ENCODE measurements at regions of chr10 and their contacts with region 1.

Region 1: DNA sequence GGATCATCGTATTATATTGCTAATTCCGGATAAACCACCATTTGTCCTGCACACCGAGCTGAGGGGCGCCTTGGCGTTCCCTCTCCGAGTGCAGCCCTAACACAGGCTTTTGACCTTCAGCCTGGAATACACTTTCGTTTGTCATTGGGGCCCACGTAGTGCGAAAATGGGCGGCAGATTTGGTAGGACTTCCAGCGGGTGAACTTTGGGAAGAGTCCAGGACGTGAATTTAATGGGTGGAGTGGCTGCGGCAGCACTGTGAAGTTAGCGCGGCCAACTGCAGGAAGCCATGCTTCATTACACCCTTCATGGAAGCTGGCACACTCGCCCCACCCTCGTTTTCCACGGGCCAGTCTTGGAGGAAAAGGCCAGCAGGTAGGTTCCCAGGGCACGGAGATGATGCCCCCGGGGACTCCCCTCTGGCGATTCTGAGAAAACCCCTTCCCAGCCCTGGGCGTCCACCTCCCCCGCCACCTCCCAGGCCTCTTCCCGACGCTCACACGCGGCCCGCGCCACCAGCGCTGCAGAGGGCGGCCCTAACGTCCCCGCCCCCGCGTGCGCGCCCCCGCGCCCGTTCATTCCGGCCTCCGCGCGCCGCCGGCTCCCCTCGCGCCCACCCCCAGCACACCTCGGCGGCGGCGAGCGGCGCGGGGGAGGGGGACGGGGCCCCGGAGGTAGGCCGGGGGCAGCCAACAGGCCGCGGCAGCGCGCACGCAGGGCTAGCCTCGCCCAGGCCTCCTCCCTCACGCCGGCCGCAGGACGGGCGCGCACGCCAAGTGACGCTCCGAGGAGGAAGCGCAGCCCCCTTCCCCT is at the start of gene MLLT10:
- DNase-seq: peak; percentile 96 to 98 (median 97)
- ATAC-seq: peak; percentile 86 to 97 (median 94)
- H3K4me3 ChIP-seq: peak within 1 kb of the TSS; percentile 54 to 88 (median 78)
- H3K27ac ChIP-seq: peak within 1 kb of the TSS; percentile 89 to 99 (median 97)
- H3K4me1 ChIP-seq: peaks cover 0 to 31% (median 22%) of the 10 kb centered on the region in 12 donors
- H3K27me3 ChIP-seq: no peaks in the 10 kb centered on the region
- CTCF ChIP-seq: peak in 7 of 12 donors; percentile 17 to 44 (median 21)
- POLR2A ChIP-seq: peak in 1 of 2 donors; percentile 76
- total RNA-seq, gene MLLT10: 17.1 to 30.7 (median 25.2) TPM

Region 2: GRCh38 chr10:21464143-21464533 is 69.5 kb before region 1 on chr10:
- intact Hi-C with region 1: no loop called
- DNase-seq: no peak
- ATAC-seq: no peak
- H3K4me3 ChIP-seq: no peak overlapping the region
- H3K27ac ChIP-seq: no peak overlapping the region
- H3K4me1 ChIP-seq: no peaks in the 10 kb centered on the region
- H3K27me3 ChIP-seq: no peaks in the 10 kb centered on the region
- CTCF ChIP-seq: no peak
- POLR2A ChIP-seq: no peak

Region 3: DNA sequence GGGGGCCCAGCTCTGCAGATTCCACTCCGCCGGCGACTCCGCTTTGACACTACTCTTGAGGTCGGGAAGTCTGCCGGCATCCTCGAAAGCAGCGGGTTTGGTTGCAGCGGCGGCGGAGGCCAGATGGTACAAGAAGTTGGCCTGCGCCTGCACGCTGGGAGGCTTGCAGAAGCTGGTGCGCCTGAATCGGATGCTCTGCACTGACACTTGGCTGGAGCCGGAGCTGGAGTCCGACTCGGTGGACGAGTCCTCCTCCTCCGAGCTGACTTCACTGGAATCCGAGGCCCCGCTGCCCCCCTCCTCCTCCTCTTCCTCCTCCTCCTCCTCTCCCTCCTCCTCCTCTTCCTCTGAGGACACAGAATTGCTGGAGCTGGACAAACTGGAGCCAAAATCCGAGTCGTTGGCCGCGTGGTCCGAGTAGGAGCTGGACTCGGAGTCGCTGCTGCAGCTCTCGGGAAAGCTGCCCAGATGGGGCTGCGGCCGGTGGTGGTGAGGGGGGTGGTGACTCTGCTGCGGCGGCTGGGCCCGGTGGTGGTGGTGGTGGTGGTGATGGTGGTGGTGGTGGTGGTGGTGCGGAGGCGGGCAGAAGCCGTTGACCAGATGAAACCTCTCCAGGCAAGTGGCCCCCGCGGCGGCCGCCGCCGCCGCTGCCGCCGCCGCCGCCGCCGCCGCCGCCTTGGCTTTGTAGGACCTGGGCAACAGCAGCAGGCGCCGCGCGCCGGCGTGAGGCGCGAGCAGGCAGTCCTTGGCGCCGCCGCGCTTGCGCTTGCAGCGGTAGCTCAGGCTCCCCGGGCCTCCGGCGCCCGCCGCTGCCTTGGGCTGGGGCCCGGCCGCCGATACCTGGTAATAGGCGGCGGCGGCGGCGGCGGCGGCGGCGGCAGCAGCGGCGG is 17.2 kb before region 1 on chr10:
- intact Hi-C with region 1: loop called in 2 of 10 experiments (anchors 2 kb)
- DNase-seq: peak; percentile 56 to 83 (median 63)
- ATAC-seq: peak in 3 of 4 donors; percentile 37 to 71 (median 47)
- H3K4me3 ChIP-seq: peak overlapping the region; percentile 52 to 80 (median 70)
- H3K27ac ChIP-seq: peak overlapping the region; percentile 47 to 90 (median 84)
- H3K4me1 ChIP-seq: peaks cover 0 to 48% (median 15%) of the 10 kb centered on the region in 12 donors
- H3K27me3 ChIP-seq: peaks cover 0 to 59% (median 0%) of the 10 kb centered on the region in 9 donors
- CTCF ChIP-seq: no peak
- POLR2A ChIP-seq: no peak

Region 4: DNA sequence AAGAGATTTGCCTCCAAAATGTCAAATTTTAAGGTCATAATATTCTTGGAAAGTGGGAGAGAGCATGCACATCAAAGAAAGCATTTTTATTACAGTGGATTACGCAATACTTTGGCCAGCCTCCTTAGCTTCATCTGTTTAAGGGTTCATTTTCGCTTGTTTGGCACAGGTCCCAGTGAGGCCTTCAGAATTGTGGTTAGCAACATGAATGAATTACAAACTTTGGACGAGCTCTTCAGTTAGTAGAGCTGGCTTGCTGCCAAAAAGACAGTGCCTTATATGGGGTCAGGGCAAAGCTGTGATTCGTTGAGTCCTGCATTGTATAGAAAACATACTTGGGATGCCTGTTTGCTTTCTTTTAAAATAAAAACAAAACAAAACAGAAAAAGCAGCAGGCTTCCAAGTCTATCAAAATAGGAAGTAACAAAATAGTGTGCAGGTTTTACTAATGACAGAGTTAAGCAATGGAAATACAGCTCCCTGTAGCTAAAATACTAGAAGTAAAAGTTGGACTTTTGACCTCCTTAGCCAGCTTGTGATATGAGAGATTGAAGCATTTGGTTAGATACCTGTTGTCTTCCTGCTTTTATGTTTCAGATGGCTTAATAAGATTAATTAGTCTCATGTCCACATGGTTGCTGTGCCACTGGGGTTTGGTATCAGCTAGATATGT is 191.2 kb after region 1 on chr10:
- intact Hi-C with region 1: loop called in 4 of 10 experiments (anchors 5 to 10 kb)
- DNase-seq: peak; percentile 74 to 94 (median 92)
- ATAC-seq: peak; percentile 89 to 97 (median 95)
- H3K4me3 ChIP-seq: no peak overlapping the region
- H3K27ac ChIP-seq: no peak overlapping the region
- H3K4me1 ChIP-seq: peaks cover 0 to 29% (median 13%) of the 10 kb centered on the region in 12 donors
- H3K27me3 ChIP-seq: no peaks in the 10 kb centered on the region
- CTCF ChIP-seq: no peak
- POLR2A ChIP-seq: no peak